ENCODE measurements at regions of chr10 and their contacts with region 1.

Region 1: DNA sequence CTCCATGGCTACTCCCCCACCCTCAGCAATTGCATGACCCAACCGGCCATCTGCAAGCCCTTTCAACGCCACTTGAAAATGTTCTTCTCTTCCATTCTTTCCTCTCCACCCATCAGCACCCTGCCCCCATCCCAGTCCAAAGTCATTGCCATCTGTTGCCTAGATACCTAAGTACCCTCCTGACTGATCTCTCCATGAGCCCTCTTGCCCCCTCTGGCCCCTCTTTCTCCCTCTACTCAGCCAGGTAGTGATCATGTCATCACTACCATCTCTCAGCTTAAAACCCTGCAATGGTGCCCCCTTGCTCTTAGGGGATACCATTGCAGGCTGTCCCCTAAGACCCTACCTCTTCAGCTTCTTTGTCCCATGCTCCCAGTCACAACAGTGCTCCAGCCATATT is 30.5 kb upstream of the BTRC start:
- DNase-seq: no peak
- H3K4me3 ChIP-seq: no peak overlapping the region
- H3K27ac ChIP-seq: no peak overlapping the region
- H3K4me1 ChIP-seq: peaks cover 0 to 3% (median 0%) of the 10 kb centered on the region in 4 experiments; a peak in 2 of 7 replicates
- H3K27me3 ChIP-seq: no peaks in the 10 kb centered on the region
- CTCF ChIP-seq: peak; percentile 21 to 60 (median 33)
- EP300 ChIP-seq: no peak
- POLR2A ChIP-seq: no peak
- RAD21 ChIP-seq: peak in 1 of 2 experiments; percentile 51; a peak in 2 of 4 replicates

Region 2: DNA sequence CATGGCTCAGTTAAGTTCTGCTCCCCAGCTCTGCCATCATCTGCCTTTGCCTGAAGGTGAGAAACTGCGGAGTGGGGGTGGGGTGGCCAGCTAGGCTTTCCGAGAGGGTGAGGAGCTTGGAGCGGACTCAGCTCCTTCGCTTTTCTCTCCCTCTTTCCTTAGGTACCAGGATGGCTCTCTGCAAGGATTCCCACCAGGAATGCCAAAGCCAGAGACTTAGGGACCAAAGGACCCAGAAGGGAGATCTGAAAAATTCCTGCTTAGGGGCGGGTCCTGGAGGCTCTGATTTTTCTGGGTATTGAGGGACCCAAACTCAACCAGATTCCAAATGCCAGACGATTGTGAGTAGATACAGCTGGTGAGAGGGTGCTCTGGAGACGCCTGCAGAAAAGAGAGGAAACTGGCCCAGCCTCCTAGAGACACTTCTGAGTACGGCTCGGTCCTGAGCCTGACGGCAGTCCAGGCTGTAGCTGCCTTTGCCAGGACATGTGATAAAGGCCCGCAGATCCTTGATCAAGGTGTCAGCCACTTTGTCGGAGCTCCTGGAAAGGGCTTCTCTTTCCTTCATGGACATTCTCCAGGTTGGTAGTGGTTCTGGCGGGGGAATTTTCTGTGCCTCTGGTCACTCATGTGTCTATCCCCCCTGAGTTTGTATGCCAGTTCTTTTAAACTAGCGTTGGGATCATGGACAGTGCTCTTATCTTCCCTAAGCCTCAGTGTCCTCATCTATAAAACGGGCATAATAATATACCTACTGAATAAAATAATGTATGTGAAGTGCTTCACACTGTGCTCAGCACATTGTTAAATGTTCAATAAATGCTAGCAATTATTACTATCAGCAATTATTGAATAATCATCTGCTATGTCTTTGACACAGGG is 12.1 kb before region 1 on chr10:
- CTCF ChIA-PET with region 1: interaction called, 42 read pairs
- POLR2A ChIA-PET with region 1: interaction called, 8 read pairs
- DNase-seq: peak in 1 of 2 experiments; percentile 74
- H3K4me3 ChIP-seq: peak overlapping the region in 2 of 4 experiments; percentile 23 to 49; a peak in 5 of 8 replicates
- H3K27ac ChIP-seq: no peak overlapping the region
- H3K4me1 ChIP-seq: peaks cover 0 to 13% (median 3%) of the 10 kb centered on the region in 4 experiments; a peak in 5 of 7 replicates
- H3K27me3 ChIP-seq: no peaks in the 10 kb centered on the region; a peak in 1 of 7 replicates
- CTCF ChIP-seq: no peak
- EP300 ChIP-seq: 0 out of 3 replicates have a peak, but pooled peaks of 1 of the 2 experiments have one; percentile 40
- POLR2A ChIP-seq: no peak; a peak in 1 of 3 replicates
- RAD21 ChIP-seq: no peak; a peak in 1 of 4 replicates

Region 3: GRCh38 chr10:101339601-101340000 is 16.1 kb after region 1 on chr10:
- CTCF ChIA-PET with region 1: interaction called, 13 read pairs
- POLR2A ChIA-PET with region 1: interaction called, 6 read pairs
- DNase-seq: no peak
- H3K4me3 ChIP-seq: no peak overlapping the region
- H3K27ac ChIP-seq: no peak overlapping the region
- H3K4me1 ChIP-seq: no peaks in the 10 kb centered on the region
- H3K27me3 ChIP-seq: no peaks in the 10 kb centered on the region; a peak in 1 of 7 replicates
- CTCF ChIP-seq: no peak
- EP300 ChIP-seq: no peak
- POLR2A ChIP-seq: no peak
- RAD21 ChIP-seq: no peak

Measured in H1 (cell line).